Breast epithelium (tissue), 4 donors: ENCODE measurements at regions of chr13 and their contacts with region 1.

Region 1: DNA sequence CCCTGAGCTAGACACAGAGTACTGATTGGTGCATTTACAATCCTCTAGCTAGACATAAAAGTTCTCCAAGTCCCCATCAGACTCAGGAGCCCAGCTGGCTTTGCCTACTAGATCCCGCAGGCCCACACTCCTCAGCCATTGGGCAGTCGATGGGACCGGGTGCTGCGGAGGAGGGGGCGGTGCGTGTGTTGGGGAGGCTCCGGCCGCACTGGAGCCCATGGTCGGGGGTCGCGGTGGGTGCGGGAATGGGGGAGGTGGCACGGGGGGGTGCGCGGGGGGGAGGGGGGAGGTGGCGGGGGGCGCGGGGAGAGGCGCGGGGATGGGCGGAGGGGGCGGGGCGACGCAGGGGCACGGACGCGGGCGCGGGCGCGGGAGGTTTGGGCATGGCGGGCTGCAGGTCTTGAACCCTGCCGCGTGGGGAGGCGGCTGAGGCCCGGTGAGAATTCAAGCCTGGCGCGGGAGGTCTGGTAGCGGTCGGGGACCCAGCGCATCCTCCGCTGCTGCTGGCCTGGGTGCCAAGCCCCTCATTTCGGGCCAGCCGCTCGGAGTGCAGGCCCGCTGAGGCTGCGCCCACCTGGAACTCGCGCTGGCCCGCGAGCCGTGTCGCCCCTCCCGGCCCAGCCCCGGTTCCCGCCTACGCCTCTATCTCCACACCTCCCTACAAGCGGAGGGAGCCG is 674.1 kb downstream of the SLITRK5 start:
- DNase-seq: no peak
- H3K4me3 ChIP-seq: no peak overlapping the region
- H3K27ac ChIP-seq: no peak overlapping the region
- H3K4me1 ChIP-seq: no peaks in the 10 kb centered on the region
- H3K27me3 ChIP-seq: no peaks in the 10 kb centered on the region
- CTCF ChIP-seq: no peak
- POLR2A ChIP-seq: no peak

Region 2: GRCh38 chr13:87754097-87754496 is 591.2 kb before region 1 on chr13:
- intact Hi-C with region 1: no loop called
- DNase-seq: no peak
- H3K4me3 ChIP-seq: no peak overlapping the region
- H3K27ac ChIP-seq: no peak overlapping the region
- H3K4me1 ChIP-seq: no peaks in the 10 kb centered on the region
- H3K27me3 ChIP-seq: no peaks in the 10 kb centered on the region
- CTCF ChIP-seq: no peak
- POLR2A ChIP-seq: no peak

Region 3: GRCh38 chr13:89496478-89496877 is 1151.2 kb after region 1 on chr13:
- intact Hi-C with region 1: loop called (anchors 5 kb)
- DNase-seq: no peak
- H3K4me3 ChIP-seq: no peak overlapping the region
- H3K27ac ChIP-seq: no peak overlapping the region
- H3K4me1 ChIP-seq: no peaks in the 10 kb centered on the region
- H3K27me3 ChIP-seq: no peaks in the 10 kb centered on the region
- CTCF ChIP-seq: no peak
- POLR2A ChIP-seq: no peak